CD4-positive, alpha-beta memory T cell (primary cell): ENCODE measurements at regions of chr15 and their contacts with region 1.

Region 1: GRCh38 chr15:43776718-43777583 is at the start of gene ELL3:
- DNase-seq: peak; percentile 85 to 91 (median 86)
- H3K4me3 ChIP-seq: peak within 1 kb of the TSS; percentile 82 to 95
- H3K4me3 Mint-ChIP-seq: peak within 1 kb of the TSS; percentile 93 to 96 (median 94)
- H3K27ac ChIP-seq: peak within 1 kb of the TSS; percentile 66
- H3K27ac Mint-ChIP-seq: peak within 1 kb of the TSS; percentile 94 to 97 (median 95)
- H3K4me1 ChIP-seq: peaks cover 16% of the 10 kb centered on the region
- H3K4me1 Mint-ChIP-seq: peaks cover 8 to 18% (median 11%) of the 10 kb centered on the region in 4 donors
- H3K27me3 ChIP-seq: no peaks in the 10 kb centered on the region
- H3K27me3 Mint-ChIP-seq: no peaks in the 10 kb centered on the region
- total RNA-seq, gene ELL3: 1.3 to 1.8 TPM

Region 2: GRCh38 chr15:43253431-43254403 is 523.2 kb before region 1 on chr15:
- CTCF ChIA-PET with region 1: no interaction called
- POLR2A ChIA-PET with region 1: no interaction called
- intact Hi-C with region 1: no loop called
- DNase-seq: peak in 4 of 5 donors; percentile 9 to 65 (median 29)
- H3K4me3 ChIP-seq: no peak overlapping the region
- H3K4me3 Mint-ChIP-seq: peak overlapping the region in 2 of 8 donors; percentile 7 to 12
- H3K27ac ChIP-seq: no peak overlapping the region
- H3K27ac Mint-ChIP-seq: peak overlapping the region in 2 of 7 donors; percentile 69 to 78
- H3K4me1 ChIP-seq: peaks cover 10% of the 10 kb centered on the region
- H3K4me1 Mint-ChIP-seq: peaks cover 0 to 14% (median 3%) of the 10 kb centered on the region in 4 donors
- H3K27me3 ChIP-seq: no peaks in the 10 kb centered on the region
- H3K27me3 Mint-ChIP-seq: peaks cover 3 to 10% of the 10 kb centered on the region in 2 donors

Region 3: DNA sequence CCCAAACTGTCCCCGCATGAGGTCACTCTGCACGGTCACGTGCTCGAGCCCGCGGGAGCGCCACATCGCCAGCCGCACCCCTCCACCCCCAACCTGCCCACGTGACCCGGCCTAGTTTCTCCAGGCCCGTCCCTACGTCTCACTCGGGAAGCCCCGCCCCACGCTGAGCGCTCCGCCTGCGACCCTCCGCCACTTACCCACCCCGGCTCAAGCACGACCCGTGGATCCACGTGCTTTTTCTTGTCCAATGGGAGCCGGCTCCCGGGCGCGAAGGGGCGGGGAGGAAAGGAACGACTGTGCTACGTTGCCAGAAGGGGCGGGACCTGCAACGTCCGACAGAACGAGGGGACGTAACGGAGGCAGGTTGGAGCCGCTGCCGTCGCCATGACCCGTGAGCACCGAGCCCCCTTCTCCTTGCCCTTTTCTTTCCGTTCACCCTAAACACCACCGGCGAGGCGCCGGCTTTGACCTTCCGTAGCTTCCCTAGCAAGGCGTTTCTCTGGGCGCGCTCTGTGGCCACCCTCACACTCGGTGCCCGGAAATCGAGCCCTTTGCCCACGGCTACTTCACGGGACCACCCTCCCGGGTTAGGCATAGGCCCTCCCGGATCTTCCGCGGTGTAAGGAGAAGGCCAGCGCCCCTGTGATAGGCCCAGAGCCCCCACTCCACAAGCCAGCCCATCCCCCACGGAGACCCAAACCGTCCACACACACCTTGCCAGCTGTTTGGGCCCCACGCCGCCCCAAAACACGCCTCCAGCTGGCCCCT is 15.2 kb after region 1 on chr15 and contains the start of gene SERF2:
- CTCF ChIA-PET with region 1: interaction called, 54 read pairs
- POLR2A ChIA-PET with region 1: interaction called, 54 read pairs
- intact Hi-C with region 1: loop called (anchors 1 kb)
- DNase-seq: peak; percentile 97 to 100 (median 98)
- H3K4me3 ChIP-seq: peak within 1 kb of the TSS; percentile 97
- H3K4me3 Mint-ChIP-seq: peak within 1 kb of the TSS; percentile 93 to 97 (median 96)
- H3K27ac ChIP-seq: peak within 1 kb of the TSS; percentile 100
- H3K27ac Mint-ChIP-seq: peak within 1 kb of the TSS; percentile 97 to 99 (median 98)
- H3K4me1 ChIP-seq: peaks cover 36% of the 10 kb centered on the region
- H3K4me1 Mint-ChIP-seq: peaks cover 20 to 56% (median 37%) of the 10 kb centered on the region in 4 donors
- H3K27me3 ChIP-seq: no peaks in the 10 kb centered on the region
- H3K27me3 Mint-ChIP-seq: no peaks in the 10 kb centered on the region
- total RNA-seq, gene SERF2: 564 to 596 TPM

Region 4: DNA sequence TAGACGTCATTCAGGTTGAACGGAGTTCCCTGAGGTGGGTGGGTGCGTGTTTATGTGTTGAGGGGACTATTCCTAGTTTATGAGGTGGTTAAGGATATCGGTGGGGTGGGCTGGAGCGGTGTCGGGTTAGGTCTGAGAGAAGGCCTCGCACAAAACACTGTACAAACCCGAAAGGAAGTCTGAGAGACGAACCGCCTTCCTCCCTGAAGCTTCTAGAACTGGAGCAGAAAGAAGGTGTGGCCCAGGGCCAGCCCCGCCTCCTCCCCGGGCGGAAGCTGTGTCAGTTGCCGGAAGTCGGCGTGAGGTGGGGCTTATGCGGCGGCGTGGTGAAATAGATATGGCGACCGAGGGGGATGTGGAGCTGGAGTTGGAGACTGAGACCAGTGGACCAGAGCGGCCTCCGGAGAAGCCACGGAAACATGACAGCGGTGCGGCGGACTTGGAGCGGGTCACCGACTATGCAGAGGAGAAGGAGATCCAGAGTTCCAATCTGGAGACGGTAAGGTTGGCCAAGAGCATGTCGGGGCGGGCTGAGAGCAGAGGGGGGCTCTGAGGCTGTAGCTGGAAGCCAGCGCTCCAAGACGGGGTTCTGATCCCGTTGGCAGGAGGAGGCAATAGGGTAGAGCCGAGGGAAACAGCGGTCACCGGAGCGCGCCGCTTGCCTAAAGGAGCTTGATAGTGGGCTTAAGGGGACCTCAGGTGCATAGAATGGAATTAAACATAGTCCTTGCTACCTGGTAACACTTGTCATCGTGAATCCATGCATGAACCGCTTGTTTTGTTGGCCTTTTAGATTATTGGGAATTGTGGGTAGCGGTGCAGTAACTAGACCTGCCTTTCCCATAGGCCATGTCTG is 23.6 kb after region 1 on chr15 and contains the start of gene HYPK:
- CTCF ChIA-PET with region 1: interaction called, 11 read pairs
- POLR2A ChIA-PET with region 1: interaction called, 39 read pairs
- intact Hi-C with region 1: loop called (anchors 1 kb)
- DNase-seq: peak; percentile 90 to 94 (median 91)
- H3K4me3 ChIP-seq: peak within 1 kb of the TSS; percentile 96 to 97
- H3K4me3 Mint-ChIP-seq: peak within 1 kb of the TSS; percentile 98 to 100 (median 100)
- H3K27ac ChIP-seq: peak within 1 kb of the TSS; percentile 76
- H3K27ac Mint-ChIP-seq: peak within 1 kb of the TSS; percentile 92 to 100 (median 99)
- H3K4me1 ChIP-seq: peaks cover 32% of the 10 kb centered on the region
- H3K4me1 Mint-ChIP-seq: peaks cover 16 to 55% (median 39%) of the 10 kb centered on the region in 4 donors
- H3K27me3 ChIP-seq: no peaks in the 10 kb centered on the region
- H3K27me3 Mint-ChIP-seq: no peaks in the 10 kb centered on the region
- total RNA-seq, gene HYPK: 23.6 to 24.6 TPM